ENCODE measurements at regions of chr12 and their contacts with region 1.

Region 1: GRCh38 chr12:55659486-55660385 is 23.0 kb downstream of the OR10P1 start:
- DNase-seq: peak in 2 of 3 donors; percentile 33 to 37
- H3K4me3 ChIP-seq: no peak overlapping the region
- H3K4me3 Mint-ChIP-seq: no peak overlapping the region
- H3K27ac ChIP-seq: no peak overlapping the region
- H3K27ac Mint-ChIP-seq: no peak overlapping the region
- H3K4me1 ChIP-seq: peaks cover 3 to 7% of the 10 kb centered on the region in 2 donors
- H3K4me1 Mint-ChIP-seq: peaks cover 29% of the 10 kb centered on the region
- H3K27me3 ChIP-seq: no peaks in the 10 kb centered on the region
- H3K27me3 Mint-ChIP-seq: peaks cover 0 to 2% (median 0%) of the 10 kb centered on the region in 3 donors
- CTCF ChIP-seq: peak; percentile 42

Region 2: DNA sequence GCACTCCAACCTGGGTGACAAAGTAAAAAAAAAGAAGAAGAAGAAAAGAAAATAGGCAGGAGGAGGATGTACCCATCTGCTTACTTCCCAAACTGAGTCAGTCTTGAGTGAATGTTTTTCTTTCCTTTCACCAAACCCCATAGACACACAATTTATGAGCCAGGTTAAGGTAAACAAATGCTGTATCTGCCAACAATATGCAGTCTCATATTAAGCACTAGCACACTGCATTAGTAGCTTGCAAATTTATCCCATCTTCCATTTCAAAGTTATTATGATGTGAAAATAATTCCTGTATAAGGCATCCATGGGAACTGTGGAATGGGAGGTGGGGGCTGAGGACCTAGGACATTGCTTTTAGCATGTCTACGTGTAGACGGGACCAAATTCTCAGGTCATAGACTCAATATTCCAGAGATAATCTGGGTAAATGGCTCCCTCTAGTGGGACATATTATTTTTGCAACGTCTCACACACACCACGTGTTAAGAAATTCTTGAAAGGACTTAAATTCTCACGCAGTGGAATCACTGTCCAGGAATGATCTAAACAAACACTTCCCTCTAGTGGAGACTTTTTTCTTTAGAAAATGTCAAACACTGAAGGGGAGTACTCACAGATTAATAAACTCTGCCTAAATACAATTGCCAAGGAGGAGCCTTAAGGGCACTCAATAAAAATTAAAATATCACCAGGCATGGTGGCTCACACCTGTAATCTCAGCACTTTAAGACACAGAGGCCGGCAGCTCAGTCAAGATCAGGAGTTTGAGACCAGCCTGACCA is 40.2 kb before region 1 on chr12:
- intact Hi-C with region 1: loop called (anchors 5 kb)
- DNase-seq: peak; percentile 76 to 91 (median 83)
- H3K4me3 ChIP-seq: no peak overlapping the region
- H3K4me3 Mint-ChIP-seq: no peak overlapping the region
- H3K27ac ChIP-seq: no peak overlapping the region
- H3K27ac Mint-ChIP-seq: peak overlapping the region in 2 of 7 donors; percentile 44 to 53
- H3K4me1 ChIP-seq: peaks cover 0 to 7% of the 10 kb centered on the region in 2 donors
- H3K4me1 Mint-ChIP-seq: peaks cover 7% of the 10 kb centered on the region
- H3K27me3 ChIP-seq: peaks cover 0 to 2% of the 10 kb centered on the region in 2 donors
- H3K27me3 Mint-ChIP-seq: peaks cover 1 to 13% (median 8%) of the 10 kb centered on the region in 3 donors
- CTCF ChIP-seq: peak; percentile 94

Region 3: GRCh38 chr12:55707841-55708694 is 48.3 kb after region 1 on chr12 and contains the start of gene ITGA7:
- intact Hi-C with region 1: loop called in 1 of 2 experiments (anchors 5 kb)
- DNase-seq: no peak
- H3K4me3 ChIP-seq: peak within 1 kb of the TSS; percentile 11 to 68 (median 35)
- H3K4me3 Mint-ChIP-seq: peak within 1 kb of the TSS; percentile 79 to 86
- H3K27ac ChIP-seq: no peak within 1 kb of the TSS
- H3K27ac Mint-ChIP-seq: peak within 1 kb of the TSS in 1 of 7 donors; percentile 73
- H3K4me1 ChIP-seq: peaks cover 26 to 30% of the 10 kb centered on the region in 2 donors
- H3K4me1 Mint-ChIP-seq: peaks cover 36% of the 10 kb centered on the region
- H3K27me3 ChIP-seq: peaks cover 18 to 59% of the 10 kb centered on the region in 2 donors
- H3K27me3 Mint-ChIP-seq: peaks cover 51 to 76% (median 69%) of the 10 kb centered on the region in 3 donors
- CTCF ChIP-seq: no peak
- polyA plus RNA-seq, gene ITGA7: 0.23 to 3.3 (median 0.55) TPM

Region 4: GRCh38 chr12:55728939-55729823 is 69.4 kb after region 1 on chr12 and contains the start of gene CD63:
- intact Hi-C with region 1: loop called in 1 of 2 experiments (anchors 5 kb)
- DNase-seq: peak; percentile 79 to 82 (median 82)
- H3K4me3 ChIP-seq: peak within 1 kb of the TSS; percentile 65 to 90 (median 82)
- H3K4me3 Mint-ChIP-seq: peak within 1 kb of the TSS; percentile 90 to 95
- H3K27ac ChIP-seq: peak within 1 kb of the TSS; percentile 99
- H3K27ac Mint-ChIP-seq: peak within 1 kb of the TSS; percentile 96 to 99 (median 97)
- H3K4me1 ChIP-seq: peaks cover 33 to 42% of the 10 kb centered on the region in 2 donors
- H3K4me1 Mint-ChIP-seq: peaks cover 45% of the 10 kb centered on the region
- H3K27me3 ChIP-seq: no peaks in the 10 kb centered on the region
- H3K27me3 Mint-ChIP-seq: peaks cover 0 to 5% (median 0%) of the 10 kb centered on the region in 3 donors
- CTCF ChIP-seq: no peak
- polyA plus RNA-seq, gene CD63: 336 to 1,099 (median 988) TPM